Heart right ventricle (tissue), 16 donors: ENCODE measurements at regions of chr12 and their contacts with region 1.

Region 1: DNA sequence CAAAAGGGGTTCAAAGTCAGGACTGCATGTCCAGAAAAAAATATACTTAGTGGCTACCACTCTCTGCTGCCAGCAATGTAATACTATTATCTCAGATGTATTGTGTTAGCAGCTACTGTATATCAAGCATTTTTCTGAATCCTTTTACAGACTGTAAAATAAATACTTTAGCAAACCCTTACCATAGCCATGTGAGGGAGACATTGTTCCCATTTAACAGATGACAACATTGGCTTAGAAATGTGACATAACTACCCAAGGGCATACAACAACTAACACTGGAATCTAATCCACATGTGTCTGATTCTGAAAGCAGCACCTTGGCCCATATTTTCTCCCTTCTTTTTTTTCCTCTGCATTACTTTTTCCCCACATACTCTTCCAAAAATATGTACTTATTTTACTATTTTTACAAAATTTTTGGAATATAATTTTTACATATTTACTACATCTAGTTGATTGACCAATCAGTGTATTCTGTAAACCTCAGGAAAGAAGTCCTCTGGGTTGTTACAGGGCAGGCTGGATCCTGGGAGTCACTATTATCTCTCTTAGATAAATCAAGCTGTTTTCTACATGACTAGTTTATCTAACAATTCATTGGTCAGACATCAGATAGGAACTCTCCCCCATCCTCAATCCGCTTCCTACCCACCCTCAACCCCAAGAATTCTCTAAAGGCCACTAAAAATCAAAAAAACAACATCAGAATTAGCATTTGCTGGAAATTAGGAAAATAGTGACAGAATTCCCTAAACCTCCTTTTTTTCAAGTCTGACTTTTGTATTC is 154.1 kb downstream of the BTG1 start:
- DNase-seq: no peak
- ATAC-seq: peak in 2 of 8 donors; percentile 24 to 25
- H3K4me3 ChIP-seq: no peak overlapping the region
- H3K27ac ChIP-seq: peak overlapping the region in 2 of 10 donors; percentile 45 to 55
- H3K4me1 ChIP-seq: peaks cover 0 to 57% (median 35%) of the 10 kb centered on the region in 9 donors
- H3K27me3 ChIP-seq: no peaks in the 10 kb centered on the region
- CTCF ChIP-seq: peak in 1 of 9 donors; percentile 23

Region 2: GRCh38 chr12:91978143-91978542 is 13.4 kb before region 1 on chr12:
- intact Hi-C with region 1: no loop called
- DNase-seq: no peak
- ATAC-seq: peak in 1 of 8 donors; percentile 43
- H3K4me3 ChIP-seq: no peak overlapping the region
- H3K27ac ChIP-seq: no peak overlapping the region
- H3K4me1 ChIP-seq: peaks cover 0 to 43% (median 7%) of the 10 kb centered on the region in 9 donors
- H3K27me3 ChIP-seq: no peaks in the 10 kb centered on the region
- CTCF ChIP-seq: no peak

Region 3: GRCh38 chr12:92078167-92079053 is 86.8 kb after region 1 on chr12:
- intact Hi-C with region 1: no loop called
- DNase-seq: no peak
- ATAC-seq: peak in 7 of 8 donors; percentile 30 to 79 (median 47)
- H3K4me3 ChIP-seq: no peak overlapping the region
- H3K27ac ChIP-seq: peak overlapping the region in 2 of 10 donors; percentile 3 to 45
- H3K4me1 ChIP-seq: peaks cover 11 to 66% (median 36%) of the 10 kb centered on the region in 9 donors
- H3K27me3 ChIP-seq: no peaks in the 10 kb centered on the region
- CTCF ChIP-seq: no peak

Region 4: DNA sequence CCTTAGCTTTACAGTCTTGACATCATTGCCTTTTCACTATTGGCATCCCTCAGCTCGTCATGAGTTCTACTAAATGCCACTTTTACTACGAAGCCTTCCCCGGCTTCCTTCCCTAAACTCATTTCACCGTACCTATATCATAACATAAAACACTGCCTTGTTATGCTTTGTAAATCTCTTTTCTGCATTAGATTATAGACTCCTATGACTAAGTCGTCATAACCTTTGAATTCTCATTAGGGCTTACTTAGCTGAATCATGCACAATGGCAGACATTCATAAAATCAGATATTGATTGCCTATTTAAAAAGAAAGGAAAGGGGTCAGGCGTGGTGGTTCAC is 133.1 kb after region 1 on chr12:
- intact Hi-C with region 1: loop called in 1 of 10 experiments (anchors 5 kb)
- DNase-seq: no peak
- ATAC-seq: no peak
- H3K4me3 ChIP-seq: no peak overlapping the region
- H3K27ac ChIP-seq: peak overlapping the region in 1 of 10 donors; percentile 68
- H3K4me1 ChIP-seq: peaks cover 0 to 36% (median 0%) of the 10 kb centered on the region in 9 donors
- H3K27me3 ChIP-seq: no peaks in the 10 kb centered on the region
- CTCF ChIP-seq: no peak

Region 5: DNA sequence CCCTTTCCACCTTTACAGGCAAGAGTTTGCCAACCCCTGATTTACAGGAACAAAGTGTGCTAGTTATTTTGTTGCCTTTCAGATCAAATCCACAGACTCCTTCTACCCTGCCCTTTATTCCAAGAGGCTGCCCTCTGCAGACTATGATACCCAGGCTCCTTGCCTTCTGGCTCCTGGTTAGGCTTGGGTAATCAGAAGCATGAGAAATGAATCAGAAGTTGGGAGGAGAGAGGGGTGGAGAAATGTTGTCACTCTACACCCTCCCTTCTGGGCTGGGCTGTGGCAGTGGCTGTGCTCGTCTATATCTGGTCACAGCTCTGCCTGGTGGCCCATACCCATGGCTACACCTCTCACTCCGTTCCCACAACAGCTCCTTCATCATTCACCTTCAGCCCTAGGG is 1952.2 kb after region 1 on chr12:
- intact Hi-C with region 1: no loop called
- DNase-seq: no peak
- ATAC-seq: peak in 5 of 8 donors; percentile 38 to 95 (median 81)
- H3K4me3 ChIP-seq: no peak overlapping the region
- H3K27ac ChIP-seq: no peak overlapping the region
- H3K4me1 ChIP-seq: no peaks in the 10 kb centered on the region
- H3K27me3 ChIP-seq: no peaks in the 10 kb centered on the region
- CTCF ChIP-seq: no peak